GM12878 (cell line): ENCODE measurements at regions of chr14 and their contacts with region 1.

Region 1: DNA sequence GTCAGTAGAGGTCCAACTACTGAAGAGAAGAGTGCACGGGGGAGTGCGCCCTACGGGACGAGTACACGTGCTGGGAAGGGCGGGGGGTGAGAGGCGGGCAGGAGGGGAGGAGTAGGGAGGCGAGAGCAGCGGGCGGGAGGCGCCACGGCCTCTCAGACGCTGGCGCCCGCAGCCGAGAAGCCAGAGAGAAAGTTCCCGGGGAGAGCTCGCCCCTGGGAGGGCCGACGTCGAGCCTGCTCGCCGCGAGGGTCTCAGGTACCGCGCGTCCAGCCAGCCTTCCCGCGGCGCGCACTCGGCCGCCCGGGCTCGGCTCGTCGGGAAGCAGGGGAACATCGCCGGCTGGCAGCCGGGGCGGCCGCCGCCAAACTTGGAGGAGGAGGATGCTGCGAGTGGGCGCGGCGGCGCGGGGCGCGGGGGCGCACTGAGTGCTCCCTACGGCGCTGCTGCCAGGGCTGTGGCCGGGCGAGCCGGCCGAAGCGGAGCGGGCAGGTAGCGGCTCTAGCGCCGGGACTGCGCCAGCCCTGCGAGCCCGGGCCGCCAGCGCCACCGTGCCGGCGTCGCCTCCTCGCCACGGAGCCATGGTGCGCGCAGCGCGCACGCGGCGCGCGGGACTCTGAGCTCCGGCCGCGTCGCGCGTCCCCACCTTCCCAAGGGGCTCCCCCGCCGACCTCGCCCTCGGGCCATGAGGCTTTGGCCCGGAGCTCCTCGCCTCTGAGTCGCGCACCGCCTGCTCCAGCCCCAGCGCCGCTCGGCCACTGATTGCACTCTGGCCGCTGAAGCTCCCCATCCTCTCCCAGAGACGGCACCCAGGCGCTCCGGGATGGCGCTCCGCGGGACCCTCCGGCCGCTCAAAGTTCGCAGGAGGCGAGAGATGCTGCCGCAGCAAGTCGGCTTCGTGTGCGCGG is at the start of gene SLC24A4:
- DNase-seq: no peak
- ATAC-seq: peak; percentile 82
- H3K4me3 ChIP-seq: peak within 1 kb of the TSS; percentile 11; the same call in 1 of the 2 replicates
- H3K27ac ChIP-seq: no peak within 1 kb of the TSS
- H3K4me1 ChIP-seq: no peaks in the 10 kb centered on the region
- H3K27me3 ChIP-seq: peaks cover 9 to 21% of the 10 kb centered on the region in 2 experiments
- CTCF ChIP-seq: peak in 1 of 3 experiments; percentile 20; a peak in 1 of 6 replicates
- EP300 ChIP-seq: no peak
- POLR2A ChIP-seq: no peak
- RAD21 ChIP-seq: no peak
- polyA plus RNA-seq, gene SLC24A4: not detected

Region 2: GRCh38 chr14:92287987-92288386 is 35.3 kb before region 1 on chr14:
- CTCF ChIA-PET with region 1: no interaction called
- POLR2A ChIA-PET with region 1: no interaction called
- RAD21 ChIA-PET with region 1: no interaction called
- SMC1A ChIA-PET with region 1: no interaction called
- in situ Hi-C with region 1: no loop called
- intact Hi-C with region 1: no loop called
- DNase-seq: no peak
- ATAC-seq: no peak
- H3K4me3 ChIP-seq: no peak overlapping the region
- H3K27ac ChIP-seq: no peak overlapping the region
- H3K4me1 ChIP-seq: no peaks in the 10 kb centered on the region
- H3K27me3 ChIP-seq: peaks cover 2 to 3% of the 10 kb centered on the region in 2 experiments; a peak in 3 of 4 replicates
- CTCF ChIP-seq: no peak
- EP300 ChIP-seq: no peak
- POLR2A ChIP-seq: no peak
- RAD21 ChIP-seq: no peak

Region 3: DNA sequence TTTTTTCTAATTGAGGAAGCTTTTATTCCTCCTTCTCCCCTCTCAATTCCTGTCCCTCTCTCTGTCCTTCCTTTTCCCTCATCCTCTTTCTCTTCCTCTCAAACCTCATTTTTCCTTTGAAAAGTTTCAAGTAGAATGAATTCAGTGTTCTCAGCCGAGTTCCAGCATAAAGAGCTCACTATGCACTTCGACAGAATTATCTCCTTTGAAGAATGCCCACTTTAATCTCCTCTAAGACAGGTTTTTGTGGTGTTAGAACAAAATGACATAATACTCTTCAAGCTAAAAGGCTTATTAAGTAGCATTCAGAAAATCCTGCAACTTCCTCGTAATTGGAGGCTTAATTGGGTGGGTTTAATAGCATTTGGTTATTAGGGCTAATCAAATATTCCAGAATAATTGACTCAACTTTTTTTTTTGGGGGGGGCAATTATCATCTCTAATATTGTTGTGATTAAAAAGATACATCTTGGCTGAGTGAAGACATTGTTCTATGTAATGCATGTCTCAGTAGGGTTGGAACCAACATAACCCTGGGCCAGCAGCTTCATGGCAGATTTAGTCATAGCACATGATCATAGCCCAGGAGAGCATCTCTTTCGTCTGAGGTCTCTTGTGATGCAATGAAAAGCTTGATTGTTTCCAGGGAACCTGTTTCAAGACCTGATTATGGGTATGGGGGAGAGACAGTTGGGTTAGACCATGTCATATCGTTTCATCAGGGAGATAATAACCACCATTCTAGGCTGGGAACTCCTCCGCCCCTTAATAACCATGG is 25.3 kb before region 1 on chr14:
- CTCF ChIA-PET with region 1: no interaction called
- POLR2A ChIA-PET with region 1: no interaction called
- RAD21 ChIA-PET with region 1: no interaction called
- SMC1A ChIA-PET with region 1: no interaction called
- in situ Hi-C with region 1: no loop called
- intact Hi-C with region 1: no loop called
- DNase-seq: no peak
- ATAC-seq: no peak
- H3K4me3 ChIP-seq: no peak overlapping the region
- H3K27ac ChIP-seq: no peak overlapping the region
- H3K4me1 ChIP-seq: no peaks in the 10 kb centered on the region
- H3K27me3 ChIP-seq: peaks cover 5 to 7% of the 10 kb centered on the region in 2 experiments; a peak in 2 of 4 replicates
- CTCF ChIP-seq: no peak
- EP300 ChIP-seq: no peak
- POLR2A ChIP-seq: no peak
- RAD21 ChIP-seq: no peak

Region 4: GRCh38 chr14:92686900-92687444 is 363.7 kb after region 1 on chr14:
- CTCF ChIA-PET with region 1: no interaction called
- POLR2A ChIA-PET with region 1: no interaction called
- RAD21 ChIA-PET with region 1: no interaction called
- SMC1A ChIA-PET with region 1: no interaction called
- in situ Hi-C with region 1: no loop called
- intact Hi-C with region 1: loop called (anchors 10 kb)
- DNase-seq: no peak
- ATAC-seq: peak; percentile 82
- H3K4me3 ChIP-seq: no peak overlapping the region
- H3K27ac ChIP-seq: no peak overlapping the region
- H3K4me1 ChIP-seq: no peaks in the 10 kb centered on the region
- H3K27me3 ChIP-seq: no peaks in the 10 kb centered on the region
- CTCF ChIP-seq: peak; percentile 78 to 89 (median 84)
- EP300 ChIP-seq: no peak
- POLR2A ChIP-seq: no peak
- RAD21 ChIP-seq: peak; percentile 64